Endothelial cell of umbilical vein (primary cell): ENCODE measurements at regions of chr1 and their contacts with region 1.

Region 1: DNA sequence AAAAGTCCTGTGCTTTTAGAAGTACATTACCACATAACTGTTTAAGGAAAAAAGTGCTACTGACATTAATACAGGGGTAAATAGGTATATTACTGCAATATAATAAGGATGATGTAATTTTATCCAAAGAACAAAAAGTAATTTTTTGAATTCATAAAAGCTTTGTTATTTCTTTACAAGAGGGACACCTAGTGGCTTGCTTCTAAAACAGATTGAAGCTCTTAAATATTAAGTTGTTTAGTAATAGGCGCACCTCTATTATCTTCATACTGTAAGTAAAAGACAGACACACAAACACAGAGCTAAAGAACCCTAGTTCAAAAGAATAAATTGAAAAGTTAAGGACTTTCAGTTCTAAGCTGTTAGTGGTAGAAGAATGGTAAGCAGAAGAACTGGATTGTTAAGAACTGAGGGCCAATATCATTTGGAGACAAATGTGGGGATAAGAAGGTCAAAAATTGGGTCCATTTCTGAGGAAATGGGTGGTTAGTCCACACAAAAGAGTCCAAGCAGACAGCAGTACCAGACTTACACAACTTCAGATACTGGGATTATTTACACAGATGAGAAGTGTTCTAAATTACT is 15.4 kb downstream of the ZNHIT6 start:
- DNase-seq: peak; percentile 60
- H3K4me3 ChIP-seq: no peak overlapping the region
- H3K27ac ChIP-seq: peak overlapping the region; percentile 38
- H3K4me1 ChIP-seq: peaks cover 7% of the 10 kb centered on the region
- H3K27me3 ChIP-seq: no peaks in the 10 kb centered on the region
- CTCF ChIP-seq: peak; percentile 22 to 26
- POLR2A ChIP-seq: no peak

Region 2: DNA sequence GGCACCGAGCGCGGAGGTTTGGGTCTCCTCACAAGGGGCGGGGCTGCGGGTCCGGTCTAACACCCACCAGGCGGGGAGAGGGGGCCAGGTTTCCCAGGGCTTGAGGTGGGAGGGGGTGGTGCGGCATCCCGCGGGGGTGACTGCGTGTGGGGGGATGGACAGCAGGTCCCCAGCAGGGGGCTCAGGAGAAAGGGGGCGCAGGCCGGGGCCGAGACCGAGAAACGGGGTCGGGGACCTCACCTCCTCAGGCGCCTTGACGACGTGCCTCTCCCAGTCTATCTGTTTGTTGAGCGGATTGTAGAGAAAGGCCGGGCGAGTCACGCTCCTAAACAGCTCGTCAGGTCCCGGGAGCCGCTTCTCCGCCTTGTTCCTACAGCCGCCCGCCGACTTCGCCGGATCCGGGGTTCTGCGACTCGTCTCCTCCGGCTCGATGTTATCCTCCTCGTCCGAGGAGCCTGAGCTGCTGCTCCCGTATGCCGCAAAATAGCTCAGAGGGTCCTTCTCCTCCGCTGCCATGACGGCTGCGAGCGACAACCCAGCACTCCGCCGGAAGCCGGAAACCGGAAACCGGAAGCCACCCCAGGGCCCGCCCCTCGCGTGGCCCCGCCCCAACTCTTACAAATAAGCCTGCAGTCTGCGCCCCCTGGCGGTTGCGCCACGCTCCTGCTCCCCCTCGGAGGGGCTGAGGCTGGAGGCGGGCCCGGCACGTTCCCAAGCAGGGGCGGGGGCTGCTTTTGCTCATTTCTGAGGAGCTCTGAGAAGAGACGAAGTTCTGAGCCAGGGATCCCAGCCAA is 433.5 kb before region 1 on chr1 and contains the start of gene C1orf52:
- CTCF ChIA-PET with region 1: interaction called, 20 read pairs
- POLR2A ChIA-PET with region 1: interaction called, 4 read pairs
- dilution Hi-C with region 1: no loop called
- intact Hi-C with region 1: loop called (anchors 5 kb)
- DNase-seq: peak; percentile 94
- H3K4me3 ChIP-seq: peak within 1 kb of the TSS; percentile 77 to 90 (median 82)
- H3K27ac ChIP-seq: peak within 1 kb of the TSS; percentile 82
- H3K4me1 ChIP-seq: peaks cover 25% of the 10 kb centered on the region
- H3K27me3 ChIP-seq: no peaks in the 10 kb centered on the region
- CTCF ChIP-seq: peak; percentile 88 to 97
- POLR2A ChIP-seq: peak; percentile 90
- total RNA-seq, gene C1orf52: 26.7 and 29.1 TPM in 2 replicates

Region 3: GRCh38 chr1:85464497-85465098 is 228.2 kb before region 1 on chr1:
- CTCF ChIA-PET with region 1: interaction called, 9 read pairs
- POLR2A ChIA-PET with region 1: no interaction called
- dilution Hi-C with region 1: no loop called
- intact Hi-C with region 1: loop called (anchors 5 kb)
- DNase-seq: peak; percentile 90
- H3K4me3 ChIP-seq: peak overlapping the region; percentile 65 to 97 (median 91)
- H3K27ac ChIP-seq: peak overlapping the region; percentile 90
- H3K4me1 ChIP-seq: peaks cover 39% of the 10 kb centered on the region
- H3K27me3 ChIP-seq: no peaks in the 10 kb centered on the region
- CTCF ChIP-seq: no peak
- POLR2A ChIP-seq: peak; percentile 92

Region 4: GRCh38 chr1:85599076-85599491 is 93.7 kb before region 1 on chr1:
- CTCF ChIA-PET with region 1: interaction called, 12 read pairs
- POLR2A ChIA-PET with region 1: no interaction called
- dilution Hi-C with region 1: no loop called
- intact Hi-C with region 1: no loop called
- DNase-seq: no peak
- H3K4me3 ChIP-seq: no peak overlapping the region
- H3K27ac ChIP-seq: no peak overlapping the region
- H3K4me1 ChIP-seq: no peaks in the 10 kb centered on the region
- H3K27me3 ChIP-seq: no peaks in the 10 kb centered on the region
- CTCF ChIP-seq: no peak
- POLR2A ChIP-seq: no peak

Region 5: DNA sequence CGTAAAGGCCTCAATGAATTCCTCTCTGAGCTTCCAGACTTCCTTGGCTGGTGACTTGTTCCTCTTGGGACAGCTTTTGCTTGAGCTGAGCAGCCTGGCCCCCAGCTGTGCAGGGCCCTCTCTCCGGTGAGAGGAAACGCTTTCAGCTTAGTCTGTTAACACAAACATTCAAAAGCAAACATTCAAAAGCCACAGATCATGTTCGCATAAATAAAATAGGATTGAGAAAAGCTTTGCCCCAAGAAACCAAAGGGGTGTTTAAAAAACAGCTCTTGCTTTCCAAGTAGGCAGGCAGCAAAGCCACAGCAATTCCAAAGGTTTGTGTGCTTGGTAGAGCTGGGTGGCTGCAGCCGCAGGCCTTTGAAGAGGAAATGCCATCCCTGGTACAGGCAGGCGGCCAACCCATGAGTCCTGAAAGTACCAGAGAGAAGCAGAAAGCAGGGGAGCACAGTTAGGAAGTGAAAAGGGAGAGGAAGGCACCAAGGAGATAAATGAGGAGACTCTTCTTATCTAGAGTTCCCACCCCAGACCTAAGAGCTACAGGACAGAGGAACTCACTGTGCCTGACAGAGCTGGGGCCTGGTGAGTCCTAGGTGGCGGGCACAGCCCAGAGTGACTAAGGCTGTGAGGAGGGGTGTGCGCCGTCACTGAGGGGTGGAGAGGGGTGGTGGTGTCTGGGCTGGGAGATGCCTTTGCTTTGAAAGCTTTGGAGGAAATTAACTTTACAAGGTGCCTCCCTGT is 63.9 kb before region 1 on chr1:
- CTCF ChIA-PET with region 1: interaction called, 25 read pairs
- POLR2A ChIA-PET with region 1: no interaction called
- dilution Hi-C with region 1: no loop called
- intact Hi-C with region 1: no loop called
- DNase-seq: peak; percentile 81
- H3K4me3 ChIP-seq: peak overlapping the region in 1 of 3 experiments; percentile 7
- H3K27ac ChIP-seq: peak overlapping the region; percentile 76
- H3K4me1 ChIP-seq: peaks cover 25% of the 10 kb centered on the region
- H3K27me3 ChIP-seq: no peaks in the 10 kb centered on the region
- CTCF ChIP-seq: no peak
- POLR2A ChIP-seq: no peak

Region 6: GRCh38 chr1:85756864-85757263 is 64.0 kb after region 1 on chr1:
- CTCF ChIA-PET with region 1: no interaction called
- POLR2A ChIA-PET with region 1: no interaction called
- dilution Hi-C with region 1: no loop called
- intact Hi-C with region 1: no loop called
- DNase-seq: no peak
- H3K4me3 ChIP-seq: no peak overlapping the region
- H3K27ac ChIP-seq: no peak overlapping the region
- H3K4me1 ChIP-seq: no peaks in the 10 kb centered on the region
- H3K27me3 ChIP-seq: peaks cover 0 to 3% of the 10 kb centered on the region in 2 experiments
- CTCF ChIP-seq: no peak
- POLR2A ChIP-seq: no peak